Lower leg skin (tissue), 4 donors: ENCODE measurements at regions of chr10 and their contacts with region 1.

Region 1: GRCh38 chr10:16141499-16141898 is 281.2 kb upstream of the MINDY3 start:
- DNase-seq: no peak
- H3K4me3 ChIP-seq: no peak overlapping the region
- CTCF ChIP-seq: no peak
- POLR2A ChIP-seq: no peak

Region 2: GRCh38 chr10:16116404-16117304 is 24.8 kb before region 1 on chr10:
- intact Hi-C with region 1: loop called (anchors 1 kb)
- DNase-seq: peak in 1 of 2 donors; percentile 25
- H3K4me3 ChIP-seq: no peak overlapping the region
- CTCF ChIP-seq: no peak
- POLR2A ChIP-seq: no peak